ENCODE measurements at regions of chr6 and their contacts with region 1.

Region 1: DNA sequence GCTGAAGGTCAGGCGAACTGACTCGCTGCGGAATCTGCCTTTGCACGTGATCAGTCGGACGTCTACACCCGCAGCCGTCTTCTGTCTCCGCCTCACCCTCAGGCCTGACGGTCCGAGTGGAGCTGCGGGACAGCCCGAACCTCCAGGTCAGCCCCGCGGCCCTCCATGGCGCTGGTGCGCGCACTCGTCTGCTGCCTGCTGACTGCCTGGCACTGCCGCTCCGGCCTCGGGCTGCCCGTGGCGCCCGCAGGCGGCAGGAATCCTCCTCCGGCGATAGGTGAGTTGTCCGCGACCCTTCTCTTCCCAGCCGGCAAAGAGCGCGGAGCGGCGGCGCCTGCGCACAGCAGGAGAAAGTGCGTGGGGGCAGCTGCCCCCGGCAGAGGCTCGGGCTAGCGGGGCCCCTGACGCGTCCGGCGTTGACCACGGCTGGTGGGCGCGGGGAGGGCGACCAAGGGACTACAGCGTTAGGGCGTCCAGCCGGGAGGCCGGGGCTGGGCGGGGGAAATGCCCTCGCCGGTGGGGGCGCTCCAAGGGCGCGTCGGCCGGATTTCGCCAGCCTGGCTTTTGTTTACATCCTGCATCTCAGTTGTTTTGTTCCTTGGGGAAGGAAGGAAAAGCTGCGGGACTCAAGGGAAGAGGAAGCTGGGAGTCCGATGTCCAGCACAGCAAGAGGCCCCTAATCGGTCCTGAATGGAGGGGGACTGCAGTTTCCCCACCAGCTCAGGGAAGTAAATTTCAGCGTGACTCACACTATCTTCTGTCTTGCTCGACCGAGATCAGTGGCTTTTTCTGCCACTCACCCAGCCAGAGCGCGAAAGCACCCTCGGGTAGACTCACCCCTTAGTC is at the start of gene SMPDL3A:
- DNase-seq: peak; percentile 88
- total RNA-seq, gene SMPDL3A: 7.4 and 16.5 TPM in 2 replicates

Region 2: DNA sequence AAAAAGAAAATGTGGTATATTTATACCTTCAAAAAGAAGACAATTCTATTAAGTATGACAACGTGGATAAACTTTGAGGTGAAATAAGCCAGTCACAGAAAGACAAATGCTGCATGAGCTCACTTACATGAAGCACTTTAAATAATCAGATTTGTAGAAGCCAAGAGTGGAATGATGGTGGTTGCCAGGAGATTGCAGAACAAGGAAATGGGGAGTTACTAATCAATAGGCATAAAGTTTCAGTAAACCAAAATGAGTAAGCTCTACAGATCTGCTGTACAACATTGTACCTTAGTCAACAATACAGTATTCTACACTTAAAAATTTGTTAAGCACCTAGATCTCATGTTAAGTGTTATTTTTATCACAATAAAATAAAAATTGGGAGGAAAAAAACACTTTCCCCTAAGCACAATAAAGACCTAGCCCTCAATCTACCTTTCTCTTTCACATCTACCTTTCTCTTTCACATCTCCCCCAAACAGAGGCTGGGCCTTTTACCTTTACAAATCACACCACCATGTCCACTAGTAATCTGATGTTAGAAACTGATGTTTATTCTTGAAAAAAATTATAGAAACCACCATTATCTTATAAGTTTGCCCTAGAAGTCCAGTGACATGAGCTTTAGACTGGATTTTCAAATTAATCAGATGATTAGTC is 105.3 kb before region 1 on chr6:
- in situ Hi-C with region 1: no loop called
- DNase-seq: no peak

Region 3: DNA sequence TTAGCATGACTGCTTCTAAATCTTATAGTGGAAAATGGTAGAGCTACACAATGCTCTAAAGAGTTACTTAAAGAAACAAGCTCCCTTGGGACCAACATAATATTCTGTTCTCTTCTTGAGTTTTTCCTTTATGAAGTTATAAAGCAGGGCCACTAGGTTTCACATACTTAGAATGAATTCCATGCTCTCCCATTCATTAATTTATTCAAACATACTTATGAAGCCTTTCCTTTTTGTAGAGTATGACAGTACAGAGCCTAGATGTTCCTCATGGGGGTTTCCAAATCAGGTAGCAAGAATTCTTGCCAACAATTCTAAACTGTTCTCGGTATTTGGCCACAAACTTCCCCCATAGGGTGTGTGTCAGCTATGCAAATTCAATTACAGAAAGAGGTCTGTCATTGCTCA is 30.5 kb before region 1 on chr6:
- in situ Hi-C with region 1: no loop called
- DNase-seq: no peak

Region 4: GRCh38 chr6:122839477-122839876 is 50.1 kb after region 1 on chr6:
- in situ Hi-C with region 1: loop called (anchors 5 kb)
- DNase-seq: peak; percentile 50